ENCODE measurements at regions of chr6 and their contacts with region 1.

Region 1: DNA sequence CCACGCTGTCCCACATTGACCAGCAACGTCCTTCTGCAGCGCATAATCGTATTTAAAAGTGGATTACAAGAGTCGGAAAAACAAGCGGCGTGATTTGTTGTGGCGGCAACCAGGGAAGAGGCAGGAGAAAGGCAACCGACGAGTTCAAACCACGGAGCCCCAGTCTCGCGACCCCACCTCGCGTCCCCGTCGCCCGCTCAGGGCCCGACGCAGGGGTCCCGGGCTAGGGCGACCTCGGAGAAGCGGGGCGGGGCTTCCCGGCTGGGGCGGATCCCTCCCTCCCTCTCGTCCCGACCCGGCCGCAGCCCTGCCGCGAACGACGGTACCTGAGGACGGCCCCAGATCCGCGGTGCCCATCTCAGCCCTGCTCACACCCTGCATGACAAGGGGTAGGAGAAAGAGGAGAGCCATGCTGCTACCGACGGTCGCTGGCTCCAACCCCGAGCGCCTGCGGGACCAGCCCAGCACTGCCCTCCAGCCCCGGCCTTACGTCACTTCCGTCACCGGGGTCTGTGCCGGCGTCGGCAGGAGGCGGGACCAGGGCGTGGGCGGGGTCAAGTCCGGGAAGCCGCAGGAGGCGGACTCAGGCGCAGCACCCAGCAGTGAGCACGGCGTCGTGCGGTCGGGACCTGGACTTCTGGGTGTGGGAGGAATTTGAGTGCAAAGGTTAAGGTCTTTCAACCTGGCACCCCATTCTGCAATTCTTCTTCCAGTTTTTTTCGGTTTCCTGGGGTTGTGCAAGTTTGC is at the start of gene IFNGR1:
- DNase-seq: peak; percentile 94
- H3K4me3 Mint-ChIP-seq: peak within 1 kb of the TSS; percentile 100
- H3K27ac Mint-ChIP-seq: peak within 1 kb of the TSS; percentile 100
- H3K4me1 Mint-ChIP-seq: peaks cover 56% of the 10 kb centered on the region
- H3K27me3 Mint-ChIP-seq: peaks cover 4% of the 10 kb centered on the region
- total RNA-seq, gene IFNGR1: 12.5 and 12.6 TPM in 2 replicates

Region 2: GRCh38 chr6:137102851-137103492 is 116.1 kb before region 1 on chr6:
- intact Hi-C with region 1: loop called (anchors 2 kb)
- DNase-seq: peak; percentile 57
- H3K4me3 Mint-ChIP-seq: peak overlapping the region; percentile 43
- H3K27ac Mint-ChIP-seq: peak overlapping the region; percentile 79
- H3K4me1 Mint-ChIP-seq: peaks cover 56% of the 10 kb centered on the region
- H3K27me3 Mint-ChIP-seq: no peaks in the 10 kb centered on the region

Region 3: DNA sequence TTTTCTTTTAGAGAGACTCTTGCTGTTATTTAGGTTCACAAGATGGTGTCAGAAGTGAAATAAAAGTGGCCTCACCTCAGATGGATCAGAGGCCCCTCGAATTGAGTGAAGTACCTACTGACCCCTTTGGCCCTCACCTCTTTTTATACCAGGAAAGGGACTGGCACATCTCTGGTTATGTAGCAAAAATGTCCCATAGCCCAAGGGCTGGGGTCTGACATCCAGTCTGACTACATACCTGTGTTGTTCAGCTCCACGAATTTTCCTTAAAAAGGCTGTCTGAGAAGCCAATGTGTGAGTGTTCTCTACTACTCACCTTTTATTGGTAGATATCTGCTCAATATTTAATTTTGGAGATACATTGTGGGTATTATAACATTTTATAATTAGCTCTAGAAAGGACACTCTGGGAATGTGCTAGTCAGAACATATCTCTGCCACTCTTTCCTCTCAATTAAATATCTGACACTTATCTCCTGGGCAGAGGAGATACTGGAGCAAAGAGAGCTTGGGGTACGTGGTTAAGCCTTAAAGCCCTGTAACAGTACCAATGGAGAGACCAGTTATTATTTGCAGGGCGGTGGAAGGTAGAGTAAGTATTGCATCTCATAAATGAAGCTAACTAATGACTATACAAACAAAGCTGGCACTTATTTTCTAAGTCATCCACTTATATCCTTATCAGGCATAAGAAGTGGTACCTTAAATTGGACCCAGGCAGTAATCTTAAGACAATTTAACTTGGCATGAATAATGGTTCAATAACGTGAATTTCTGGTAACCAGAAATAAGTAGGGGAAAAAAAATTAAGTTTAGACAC is 25.6 kb before region 1 on chr6:
- intact Hi-C with region 1: no loop called
- DNase-seq: no peak
- H3K4me3 Mint-ChIP-seq: no peak overlapping the region
- H3K27ac Mint-ChIP-seq: no peak overlapping the region
- H3K4me1 Mint-ChIP-seq: peaks cover 15% of the 10 kb centered on the region
- H3K27me3 Mint-ChIP-seq: no peaks in the 10 kb centered on the region

Region 4: DNA sequence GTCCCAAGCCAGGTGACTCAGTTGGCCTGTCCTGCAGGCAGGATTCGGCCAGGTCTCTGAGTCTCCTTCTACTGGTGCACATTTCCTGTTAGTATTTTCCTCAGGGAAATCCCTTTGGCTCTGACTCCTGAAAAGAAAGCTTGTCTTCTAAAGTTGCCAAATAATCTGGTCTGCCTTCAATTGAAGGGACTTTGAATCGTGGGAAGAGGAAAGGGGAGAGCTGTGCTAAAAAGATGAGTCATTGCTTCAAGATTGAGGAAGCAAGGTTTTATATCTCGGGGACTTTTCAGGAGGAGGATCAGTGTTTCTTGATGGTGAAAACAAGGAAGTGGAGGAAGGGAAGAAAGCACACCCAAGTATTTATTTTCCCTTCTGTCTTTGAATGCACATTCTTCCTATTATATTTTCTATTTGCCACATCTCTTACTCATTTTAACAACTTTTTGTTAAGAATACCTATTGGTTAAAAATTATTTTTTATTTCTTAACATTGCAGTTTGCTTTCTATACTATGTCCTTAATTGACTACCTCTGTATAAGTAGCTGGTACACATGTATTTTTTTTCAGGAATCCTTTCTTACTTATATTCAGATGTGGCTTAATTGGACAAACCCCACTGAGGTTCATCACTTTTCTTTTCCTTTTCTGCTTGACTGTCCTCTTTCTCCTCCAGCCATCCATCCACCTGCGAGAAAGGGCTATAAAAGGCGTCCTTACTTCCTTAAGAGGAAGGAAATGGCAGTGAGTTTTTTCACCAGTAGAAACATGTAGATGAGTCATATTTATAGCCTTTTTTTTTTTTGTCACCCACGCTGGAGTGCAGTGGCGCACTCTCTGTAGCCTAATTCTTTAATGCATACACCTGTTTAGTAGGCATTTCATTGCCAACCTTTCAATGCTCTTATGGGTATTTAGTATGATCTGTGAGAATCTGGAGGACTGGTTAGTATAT is 15.1 kb after region 1 on chr6:
- intact Hi-C with region 1: loop called (anchors 1 kb)
- DNase-seq: peak; percentile 12
- H3K4me3 Mint-ChIP-seq: peak overlapping the region; percentile 25
- H3K27ac Mint-ChIP-seq: peak overlapping the region; percentile 50
- H3K4me1 Mint-ChIP-seq: peaks cover 59% of the 10 kb centered on the region
- H3K27me3 Mint-ChIP-seq: peaks cover 8% of the 10 kb centered on the region

Region 5: GRCh38 chr6:137313928-137314855 is 95.1 kb after region 1 on chr6:
- intact Hi-C with region 1: loop called (anchors 5 kb)
- DNase-seq: peak; percentile 32
- H3K4me3 Mint-ChIP-seq: no peak overlapping the region
- H3K27ac Mint-ChIP-seq: no peak overlapping the region
- H3K4me1 Mint-ChIP-seq: peaks cover 9% of the 10 kb centered on the region
- H3K27me3 Mint-ChIP-seq: peaks cover 15% of the 10 kb centered on the region

Region 6: DNA sequence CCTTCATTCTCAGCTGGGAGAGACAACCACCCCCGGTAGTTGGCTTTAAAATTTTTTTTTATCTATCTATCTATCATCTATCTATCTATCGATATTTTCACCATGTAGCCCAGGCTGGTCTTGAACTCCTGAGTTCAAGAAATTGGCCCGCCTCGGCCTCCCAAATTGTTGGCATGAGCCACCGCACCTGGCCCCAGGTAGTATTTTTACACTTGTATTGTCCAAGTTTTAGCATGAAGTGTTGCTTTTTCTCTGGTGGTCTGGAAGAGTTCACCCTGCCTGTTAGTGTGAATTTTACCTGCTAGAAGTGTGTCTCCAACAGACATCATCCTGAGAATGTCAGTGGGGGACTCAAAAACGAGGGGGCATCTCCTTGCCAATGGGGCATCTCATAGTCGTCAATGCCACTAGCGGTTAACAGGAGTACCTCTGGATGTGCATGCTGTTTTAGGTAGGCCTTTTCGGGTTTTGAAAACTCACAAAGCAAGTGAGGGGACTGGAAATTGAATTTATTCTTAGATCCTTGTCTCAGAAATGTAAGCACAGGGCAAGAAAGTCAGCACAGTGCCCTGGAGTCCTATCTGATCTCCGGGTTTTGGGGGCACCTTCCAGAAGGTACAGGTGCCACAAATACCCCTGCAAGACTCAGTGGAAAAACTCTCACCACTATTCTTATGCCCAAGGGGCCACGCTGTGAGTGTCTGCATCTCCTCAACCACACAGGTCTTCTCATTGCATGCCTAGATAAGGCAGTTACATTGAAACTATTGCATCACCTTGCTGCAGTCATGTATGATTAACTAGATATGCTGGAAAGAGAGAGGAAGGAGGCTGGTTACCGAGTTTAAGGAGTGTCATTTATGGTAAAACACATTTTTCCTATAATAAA is 685.1 kb after region 1 on chr6:
- intact Hi-C with region 1: loop called (anchors 5 kb)
- DNase-seq: no peak
- H3K4me3 Mint-ChIP-seq: peak overlapping the region; percentile 19
- H3K27ac Mint-ChIP-seq: peak overlapping the region; percentile 97
- H3K4me1 Mint-ChIP-seq: peaks cover 59% of the 10 kb centered on the region
- H3K27me3 Mint-ChIP-seq: no peaks in the 10 kb centered on the region

Measured in activated T-helper 1 cell treated with anti-CD3 and anti-CD28 coated beads, Interleukin-12 subunit alpha, Interleukin-12 subunit beta, Interleukin-2, Interleukin-4 antibody, amounts not matched to agents 30 ng/mL and 10 ng/mL and 1 ng/mL, durations not matched to agents 14 hours and 24 hours and 36 hours (primary cell).